ENCODE measurements at regions of chr6 and their contacts with region 1.

Region 1: DNA sequence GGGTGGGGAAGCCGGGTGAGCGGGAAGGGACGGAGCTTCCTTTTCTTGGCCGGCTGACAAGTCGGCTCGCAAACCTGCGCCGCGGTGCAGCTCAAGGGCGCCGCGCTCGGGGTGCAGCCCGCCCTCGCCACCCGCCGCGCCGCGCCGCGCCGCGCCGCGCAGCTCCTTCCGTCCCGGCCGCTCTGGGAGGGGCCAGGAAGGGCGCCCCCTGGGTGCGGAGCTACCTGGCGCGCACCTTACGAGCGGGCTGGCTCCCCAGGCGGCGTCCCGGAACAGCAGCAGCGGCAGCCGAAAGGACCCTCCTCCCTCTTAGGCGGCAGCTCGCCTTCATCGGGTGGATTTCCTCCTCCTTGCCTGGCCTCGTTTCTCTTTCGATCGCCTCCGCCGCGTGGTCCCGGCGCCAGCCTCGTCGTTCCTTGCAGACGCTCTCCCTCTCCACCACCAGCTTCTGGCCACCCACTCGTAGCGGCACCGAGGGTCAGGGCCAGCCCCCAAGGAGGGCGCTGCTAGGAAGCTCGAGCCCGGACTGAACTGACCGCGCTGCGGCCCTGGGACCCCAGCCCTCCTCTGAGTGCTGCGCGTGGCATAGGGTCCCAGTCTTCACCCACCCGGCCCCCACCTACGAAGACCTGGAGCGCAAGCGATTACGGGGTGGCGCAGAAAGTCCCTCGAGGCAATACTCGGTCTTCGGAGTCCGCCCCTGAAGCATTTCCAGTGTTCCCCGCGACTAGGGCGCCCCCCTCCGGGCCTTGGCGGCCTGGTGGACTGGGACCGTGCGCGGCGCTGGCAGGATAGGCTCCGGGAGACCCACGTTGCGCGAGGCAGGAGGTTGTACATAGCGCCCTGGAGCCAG is at the start of gene MAP3K5:
- DNase-seq: peak; percentile 93 to 98 (median 97)
- ATAC-seq: peak; percentile 95 to 96
- H3K4me3 ChIP-seq: peak within 1 kb of the TSS; percentile 66
- H3K27ac ChIP-seq: peak within 1 kb of the TSS; percentile 71
- H3K4me1 ChIP-seq: no peaks in the 10 kb centered on the region
- H3K27me3 ChIP-seq: no peaks in the 10 kb centered on the region
- total RNA-seq, gene MAP3K5: 3.9 to 7.3 (median 5.5) TPM

Region 2: DNA sequence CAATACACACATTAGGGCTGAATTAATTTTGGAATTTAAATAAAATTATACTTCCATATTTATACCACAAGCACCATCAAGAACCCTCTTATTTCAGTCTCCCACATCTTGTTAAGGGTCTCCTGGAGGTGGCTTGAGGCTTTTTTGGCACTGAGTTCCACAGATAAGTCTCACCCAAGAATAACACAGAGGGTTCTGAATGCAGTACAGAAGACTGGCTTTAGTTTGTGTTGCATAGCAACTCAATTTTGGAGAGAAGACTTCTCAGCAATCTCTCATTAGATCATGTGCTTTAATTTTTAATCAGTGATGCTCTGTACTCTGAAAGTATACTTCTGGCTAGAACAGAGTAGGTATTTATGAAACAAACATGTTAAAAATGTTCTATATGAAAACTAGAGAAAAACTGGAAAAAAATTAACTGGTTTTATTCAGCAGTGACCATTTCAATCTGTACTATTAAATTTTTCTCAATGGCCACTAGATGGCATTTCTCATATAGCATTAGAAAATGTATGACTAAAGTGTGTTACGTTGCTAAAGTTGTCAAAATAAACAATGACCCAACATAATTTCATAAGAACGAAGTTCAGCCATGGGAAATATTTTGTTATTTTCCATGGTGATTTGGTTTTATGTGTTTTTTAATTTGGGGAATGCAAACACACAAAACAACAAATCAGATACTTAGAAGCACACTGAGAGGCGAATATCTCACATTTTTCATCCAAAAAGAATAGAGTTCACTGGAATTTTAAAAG is 209.7 kb before region 1 on chr6:
- intact Hi-C with region 1: loop called in 1 of 4 experiments (anchors 10 kb)
- DNase-seq: no peak
- ATAC-seq: peak; percentile 29 to 51
- H3K4me3 ChIP-seq: no peak overlapping the region
- H3K27ac ChIP-seq: no peak overlapping the region
- H3K4me1 ChIP-seq: no peaks in the 10 kb centered on the region
- H3K27me3 ChIP-seq: no peaks in the 10 kb centered on the region

Region 3: GRCh38 chr6:136643850-136644596 is 148.6 kb before region 1 on chr6:
- intact Hi-C with region 1: loop called (anchors 1 to 5 kb)
- DNase-seq: peak; percentile 88 to 95 (median 89)
- ATAC-seq: peak; percentile 93 to 94
- H3K4me3 ChIP-seq: no peak overlapping the region
- H3K27ac ChIP-seq: peak overlapping the region; percentile 71
- H3K4me1 ChIP-seq: peaks cover 8% of the 10 kb centered on the region
- H3K27me3 ChIP-seq: no peaks in the 10 kb centered on the region

Region 4: GRCh38 chr6:137013738-137014602 is 221.3 kb after region 1 on chr6:
- intact Hi-C with region 1: no loop called
- DNase-seq: no peak
- ATAC-seq: peak; percentile 34 to 75
- H3K4me3 ChIP-seq: no peak overlapping the region
- H3K27ac ChIP-seq: no peak overlapping the region
- H3K4me1 ChIP-seq: no peaks in the 10 kb centered on the region
- H3K27me3 ChIP-seq: no peaks in the 10 kb centered on the region

Measured in right cardiac atrium (tissue), 5 donors.